ENCODE measurements at regions of chr12 and their contacts with region 1.

Region 1: DNA sequence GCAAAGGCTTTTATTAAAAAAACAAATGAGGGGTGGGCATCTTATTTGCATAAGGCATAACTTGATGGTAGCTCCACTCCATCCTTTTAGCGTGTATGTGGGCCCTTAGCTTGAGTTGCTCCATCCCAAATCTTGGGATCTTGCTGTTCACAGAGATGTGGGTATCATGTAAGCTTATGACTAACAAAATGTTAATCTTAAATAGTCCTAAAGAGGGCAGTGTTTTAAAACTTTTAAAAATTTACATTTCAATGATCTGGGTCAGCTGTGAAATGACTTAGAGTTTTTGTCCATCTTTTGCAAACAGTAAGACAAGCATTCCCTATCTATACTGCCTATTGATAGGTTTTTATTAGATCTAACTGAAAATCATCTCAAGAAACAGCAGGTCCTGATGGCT is 86.0 kb downstream of the SLCO1A2 start:
- DNase-seq: peak; percentile 22
- H3K4me3 ChIP-seq: no peak overlapping the region
- H3K27ac ChIP-seq: no peak overlapping the region
- H3K4me1 ChIP-seq: no peaks in the 10 kb centered on the region
- H3K27me3 ChIP-seq: no peaks in the 10 kb centered on the region
- CTCF ChIP-seq: no peak
- POLR2A ChIP-seq: no peak

Region 2: DNA sequence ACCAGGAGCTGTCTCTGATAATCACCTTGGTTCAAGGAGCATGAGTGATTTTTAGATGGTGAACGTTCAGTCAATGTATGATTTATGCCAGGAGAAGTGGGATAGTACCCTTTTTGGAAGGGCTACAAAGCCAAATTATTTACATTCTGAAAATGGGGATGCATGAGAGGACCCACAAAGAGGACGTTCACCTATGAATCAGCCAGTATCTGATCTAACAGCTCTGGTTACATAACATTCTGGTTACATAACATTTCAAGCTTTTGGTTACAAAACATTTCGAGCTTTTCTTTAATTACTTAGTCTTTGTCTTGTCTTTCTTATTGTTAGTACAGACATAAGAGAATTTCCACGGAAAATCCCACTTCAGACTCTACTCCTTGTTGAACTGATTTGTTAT is 17.3 kb after region 1 on chr12:
- CTCF ChIA-PET with region 1: interaction called, 11 read pairs
- POLR2A ChIA-PET with region 1: no interaction called
- dilution Hi-C with region 1: no loop called
- intact Hi-C with region 1: no loop called
- DNase-seq: no peak
- H3K4me3 ChIP-seq: no peak overlapping the region
- H3K27ac ChIP-seq: no peak overlapping the region
- H3K4me1 ChIP-seq: no peaks in the 10 kb centered on the region
- H3K27me3 ChIP-seq: peaks cover 5 to 14% of the 10 kb centered on the region in 2 experiments
- CTCF ChIP-seq: no peak
- POLR2A ChIP-seq: no peak